HCT116 (cell line): ENCODE measurements at regions of chr1 and their contacts with region 1.

Region 1: DNA sequence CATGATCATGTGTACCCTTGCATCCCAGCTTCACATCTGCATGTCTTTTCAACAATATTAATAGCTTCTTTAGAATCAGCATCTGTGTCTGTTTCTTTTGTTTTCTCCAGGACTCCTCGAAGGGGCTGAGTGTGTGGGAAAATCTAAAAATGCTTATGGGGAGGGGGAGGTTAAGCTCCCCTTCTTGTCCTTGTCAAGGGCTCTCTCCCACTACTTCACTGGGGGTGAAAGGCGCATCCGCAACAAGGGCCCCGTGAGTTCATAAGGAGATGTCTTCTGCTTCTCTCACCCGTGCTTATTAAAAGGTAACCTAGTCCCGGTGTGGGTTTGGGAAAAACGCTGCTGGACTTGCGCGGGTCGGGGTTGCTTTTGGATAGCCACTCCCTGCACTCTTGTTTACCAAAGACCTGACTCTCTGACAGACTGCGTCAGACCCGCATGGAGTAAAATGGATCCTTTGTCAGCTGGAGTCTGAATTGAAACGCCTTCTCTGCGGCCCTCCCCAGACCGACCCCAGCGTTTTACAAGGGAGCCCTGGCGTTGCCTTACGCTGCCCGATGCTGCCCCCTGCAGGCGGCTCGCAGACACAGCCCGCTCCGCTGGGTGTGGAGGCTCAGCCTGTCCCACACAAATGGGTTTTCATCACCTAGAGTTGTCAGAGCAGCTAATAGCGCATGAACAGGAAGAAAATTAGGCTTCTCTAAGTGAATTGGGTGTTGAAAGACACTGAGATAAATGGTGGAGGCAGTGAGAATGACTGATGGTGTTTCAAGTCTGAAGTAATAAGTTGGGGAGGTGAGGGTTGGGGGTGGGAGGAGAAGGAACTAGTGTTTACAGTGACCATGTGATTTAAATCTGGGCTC is 53.8 kb downstream of the IER5 start:
- DNase-seq: peak; percentile 48
- ATAC-seq: peak; percentile 97
- H3K4me3 ChIP-seq: no peak overlapping the region
- H3K27ac ChIP-seq: no peak overlapping the region
- H3K4me1 ChIP-seq: peaks cover 0 to 43% of the 10 kb centered on the region in 2 experiments; a peak in 2 of 4 replicates
- H3K27me3 ChIP-seq: no peaks in the 10 kb centered on the region
- CTCF ChIP-seq: peak; percentile 96 to 99 (median 96)
- POLR2A ChIP-seq: no peak
- RAD21 ChIP-seq: peak; percentile 100

Region 2: GRCh38 chr1:180515864-180516388 is 626.4 kb before region 1 on chr1:
- CTCF ChIA-PET with region 1: interaction called, 13 read pairs
- POLR2A ChIA-PET with region 1: no interaction called
- RAD21 ChIA-PET with region 1: no interaction called
- intact Hi-C with region 1: loop called (anchors 1 kb)
- DNase-seq: peak; percentile 73
- ATAC-seq: peak; percentile 99
- H3K4me3 ChIP-seq: no peak overlapping the region
- H3K27ac ChIP-seq: peak overlapping the region; percentile 11; the same call in 1 of the 2 replicates
- H3K4me1 ChIP-seq: peaks cover 4 to 8% of the 10 kb centered on the region in 2 experiments; a peak in 2 of 4 replicates
- H3K27me3 ChIP-seq: no peaks in the 10 kb centered on the region
- CTCF ChIP-seq: peak; percentile 64 to 83 (median 80)
- POLR2A ChIP-seq: no peak
- RAD21 ChIP-seq: peak; percentile 94

Region 3: GRCh38 chr1:180533266-180533987 is 608.9 kb before region 1 on chr1:
- CTCF ChIA-PET with region 1: no interaction called
- POLR2A ChIA-PET with region 1: no interaction called
- RAD21 ChIA-PET with region 1: no interaction called
- intact Hi-C with region 1: loop called (anchors 5 kb)
- DNase-seq: peak; percentile 56
- ATAC-seq: peak; percentile 97
- H3K4me3 ChIP-seq: no peak overlapping the region
- H3K27ac ChIP-seq: no peak overlapping the region
- H3K4me1 ChIP-seq: 0 out of 4 replicates have a peak, but pooled peaks cover 0 to 3% of the 10 kb centered on the region in 2 experiments
- H3K27me3 ChIP-seq: no peaks in the 10 kb centered on the region
- CTCF ChIP-seq: peak; percentile 84 to 94 (median 91)
- POLR2A ChIP-seq: no peak
- RAD21 ChIP-seq: peak; percentile 94

Region 4: DNA sequence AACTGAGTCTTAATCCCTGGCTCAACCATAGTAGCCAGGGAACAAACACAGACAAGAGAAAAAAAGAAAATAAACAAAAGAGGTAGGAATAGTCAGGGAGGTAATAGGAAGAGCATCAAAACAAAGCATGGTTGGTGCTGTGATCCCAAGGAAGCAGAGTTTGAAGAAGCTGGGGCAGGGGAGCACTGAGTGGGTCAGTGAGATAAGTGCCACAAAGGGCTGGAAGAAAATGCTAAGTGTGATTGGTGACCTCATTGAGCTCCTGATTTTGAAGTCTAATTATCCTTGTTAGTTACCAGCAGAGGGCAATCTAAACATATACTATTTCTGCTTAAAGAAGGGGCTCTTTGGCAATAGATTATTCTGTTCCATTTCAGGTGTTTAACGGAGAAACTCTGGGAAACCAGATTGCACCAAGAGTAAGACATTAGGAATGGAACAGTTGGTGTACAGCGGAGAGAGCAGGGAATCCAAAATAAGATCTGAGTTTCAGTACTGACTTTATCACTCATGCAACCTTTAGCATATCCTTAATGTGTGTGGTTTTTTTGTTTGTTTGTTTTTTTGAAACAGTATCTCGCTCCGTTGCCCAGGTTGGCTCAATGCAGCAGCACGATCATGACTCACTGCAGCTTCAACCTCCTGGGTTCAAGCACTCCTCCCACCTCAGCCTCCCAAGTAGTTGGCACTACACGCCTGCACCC is 260.4 kb before region 1 on chr1:
- CTCF ChIA-PET with region 1: interaction called, 40 read pairs
- POLR2A ChIA-PET with region 1: interaction called, 3 read pairs
- RAD21 ChIA-PET with region 1: interaction called, 6 to 9 read pairs
- intact Hi-C with region 1: loop called (anchors 1 kb)
- DNase-seq: peak; percentile 21
- ATAC-seq: peak; percentile 78
- H3K4me3 ChIP-seq: no peak overlapping the region
- H3K27ac ChIP-seq: no peak overlapping the region
- H3K4me1 ChIP-seq: peaks cover 0 to 4% of the 10 kb centered on the region in 2 experiments; a peak in 1 of 4 replicates
- H3K27me3 ChIP-seq: no peaks in the 10 kb centered on the region
- CTCF ChIP-seq: peak; percentile 21 to 68 (median 58); a peak in 4 of 6 replicates
- POLR2A ChIP-seq: no peak
- RAD21 ChIP-seq: peak; percentile 81

Region 5: GRCh38 chr1:181021811-181022434 is 120.4 kb before region 1 on chr1:
- CTCF ChIA-PET with region 1: no interaction called
- POLR2A ChIA-PET with region 1: no interaction called
- RAD21 ChIA-PET with region 1: no interaction called
- intact Hi-C with region 1: loop called (anchors 5 kb)
- DNase-seq: no peak
- ATAC-seq: peak; percentile 38
- H3K4me3 ChIP-seq: peak overlapping the region; percentile 82 to 94
- H3K27ac ChIP-seq: peak overlapping the region; percentile 84
- H3K4me1 ChIP-seq: peaks cover 6 to 12% of the 10 kb centered on the region in 2 experiments
- H3K27me3 ChIP-seq: no peaks in the 10 kb centered on the region; the same call in 1 of the 2 replicates
- CTCF ChIP-seq: no peak
- POLR2A ChIP-seq: no peak
- RAD21 ChIP-seq: no peak

Region 6: GRCh38 chr1:181033799-181034451 is 108.4 kb before region 1 on chr1 and contains the start of gene MR1:
- CTCF ChIA-PET with region 1: interaction called, 15 read pairs
- POLR2A ChIA-PET with region 1: no interaction called
- RAD21 ChIA-PET with region 1: interaction called in 1 of 2 experiments, 3 read pairs
- intact Hi-C with region 1: loop called (anchors 1 kb)
- DNase-seq: peak; percentile 81
- ATAC-seq: peak; percentile 81
- H3K4me3 ChIP-seq: peak within 1 kb of the TSS; percentile 49 to 59
- H3K27ac ChIP-seq: peak within 1 kb of the TSS; percentile 9
- H3K4me1 ChIP-seq: peaks cover 2 to 18% of the 10 kb centered on the region in 2 experiments; a peak in 3 of 4 replicates
- H3K27me3 ChIP-seq: no peaks in the 10 kb centered on the region
- CTCF ChIP-seq: no peak
- POLR2A ChIP-seq: no peak
- RAD21 ChIP-seq: no peak
- total RNA-seq, gene MR1: 6.6 TPM

Region 7: DNA sequence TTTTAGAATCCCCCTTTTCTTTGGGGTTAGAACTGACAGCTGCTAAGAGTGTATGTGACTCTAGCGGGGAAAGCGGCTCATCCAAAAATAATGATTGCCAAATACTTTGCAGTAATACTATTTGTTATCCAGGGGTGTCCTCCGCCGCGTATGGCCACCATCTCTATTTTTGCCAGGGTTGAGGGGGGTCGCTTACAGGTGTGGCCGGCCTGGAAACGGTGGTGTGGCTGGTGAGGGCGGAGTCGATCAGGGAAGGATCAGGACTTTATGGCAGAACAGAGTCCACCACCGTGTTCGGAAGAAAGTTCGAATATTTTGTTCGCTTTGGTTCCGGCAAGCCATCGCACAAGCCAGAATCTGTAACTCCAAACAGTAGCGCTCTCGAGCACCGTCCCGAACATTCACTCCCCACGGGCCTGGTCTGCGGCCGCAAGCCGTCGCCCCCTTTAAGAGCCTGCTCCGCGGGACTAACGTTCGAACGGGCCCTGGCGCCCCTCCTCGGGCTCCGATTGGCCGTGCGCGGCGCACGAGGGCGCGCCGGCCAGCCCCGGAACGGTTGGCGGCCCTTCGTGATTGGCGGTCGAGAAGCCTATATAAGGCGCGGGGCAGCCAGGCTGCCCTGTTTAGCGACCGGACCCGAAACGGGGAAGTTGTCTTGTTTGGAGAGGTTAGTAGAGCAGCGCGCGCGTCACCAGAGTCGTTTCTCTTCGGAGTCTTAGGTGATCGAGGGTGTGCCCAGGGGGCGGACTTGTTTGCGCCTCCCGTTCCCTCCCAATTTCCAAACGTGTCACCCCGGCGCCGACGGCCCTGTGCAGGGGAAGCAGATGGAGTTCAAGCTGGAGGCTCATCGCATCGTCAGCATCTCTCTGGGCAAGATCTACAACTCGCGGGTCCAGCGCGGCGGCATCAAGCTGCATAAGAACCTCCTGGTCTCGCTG is 54.0 kb before region 1 on chr1 and contains the start of gene IER5:
- CTCF ChIA-PET with region 1: interaction called, 40 read pairs
- POLR2A ChIA-PET with region 1: interaction called, 7 read pairs
- RAD21 ChIA-PET with region 1: interaction called, 16 read pairs
- intact Hi-C with region 1: loop called (anchors 1 kb)
- DNase-seq: peak; percentile 94
- ATAC-seq: peak; percentile 83
- H3K4me3 ChIP-seq: peak within 1 kb of the TSS; percentile 66 to 74
- H3K27ac ChIP-seq: peak within 1 kb of the TSS; percentile 82
- H3K4me1 ChIP-seq: peaks cover 21 to 44% of the 10 kb centered on the region in 2 experiments
- H3K27me3 ChIP-seq: no peaks in the 10 kb centered on the region
- CTCF ChIP-seq: no peak
- POLR2A ChIP-seq: peak; percentile 99
- RAD21 ChIP-seq: no peak; the same call in 1 of the 2 replicates
- total RNA-seq, gene IER5: 30.5 TPM

Region 8: GRCh38 chr1:181397845-181398244 is 255.5 kb after region 1 on chr1:
- CTCF ChIA-PET with region 1: no interaction called
- POLR2A ChIA-PET with region 1: no interaction called
- RAD21 ChIA-PET with region 1: no interaction called
- intact Hi-C with region 1: no loop called
- DNase-seq: no peak
- ATAC-seq: no peak
- H3K4me3 ChIP-seq: no peak overlapping the region
- H3K27ac ChIP-seq: no peak overlapping the region
- H3K4me1 ChIP-seq: no peaks in the 10 kb centered on the region
- H3K27me3 ChIP-seq: no peaks in the 10 kb centered on the region; the same call in none of the 2 replicates
- CTCF ChIP-seq: no peak
- POLR2A ChIP-seq: no peak
- RAD21 ChIP-seq: no peak

Region 9: DNA sequence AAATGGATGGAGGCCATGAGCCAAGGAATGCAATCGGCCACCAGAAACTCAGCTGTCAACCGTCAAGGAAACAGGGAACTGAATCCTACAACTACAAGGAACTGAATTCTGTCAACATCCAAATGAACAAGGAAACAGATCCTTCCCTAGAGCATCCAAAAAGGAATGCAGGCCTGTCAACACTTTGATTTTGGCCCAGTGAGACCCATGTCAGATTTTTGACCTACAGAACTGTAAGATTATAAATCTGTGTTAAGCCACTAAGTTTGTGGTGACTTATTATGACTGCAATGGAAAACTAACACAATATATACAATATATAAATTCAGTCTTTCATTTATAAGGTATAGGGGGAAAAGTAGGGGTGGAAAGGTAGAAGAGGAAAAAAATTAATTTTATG is 1755.4 kb after region 1 on chr1:
- CTCF ChIA-PET with region 1: no interaction called
- POLR2A ChIA-PET with region 1: no interaction called
- RAD21 ChIA-PET with region 1: no interaction called
- intact Hi-C with region 1: no loop called
- DNase-seq: no peak
- ATAC-seq: no peak
- H3K4me3 ChIP-seq: no peak overlapping the region
- H3K27ac ChIP-seq: no peak overlapping the region
- H3K4me1 ChIP-seq: peaks cover 2 to 3% of the 10 kb centered on the region in 2 experiments; a peak in 1 of 4 replicates
- H3K27me3 ChIP-seq: no peaks in the 10 kb centered on the region
- CTCF ChIP-seq: no peak
- POLR2A ChIP-seq: no peak
- RAD21 ChIP-seq: no peak